Posterior cingulate gyrus (tissue), 11 donors: ENCODE measurements at regions of chr2 and their contacts with region 1.

Region 1: GRCh38 chr2:190880378-190881073 is at the start of gene GLS:
- DNase-seq: peak; percentile 95 to 100 (median 98)

Region 2: GRCh38 chr2:190698895-190699294 is 181.6 kb before region 1 on chr2:
- intact Hi-C with region 1: no loop called
- DNase-seq: no peak

Region 3: DNA sequence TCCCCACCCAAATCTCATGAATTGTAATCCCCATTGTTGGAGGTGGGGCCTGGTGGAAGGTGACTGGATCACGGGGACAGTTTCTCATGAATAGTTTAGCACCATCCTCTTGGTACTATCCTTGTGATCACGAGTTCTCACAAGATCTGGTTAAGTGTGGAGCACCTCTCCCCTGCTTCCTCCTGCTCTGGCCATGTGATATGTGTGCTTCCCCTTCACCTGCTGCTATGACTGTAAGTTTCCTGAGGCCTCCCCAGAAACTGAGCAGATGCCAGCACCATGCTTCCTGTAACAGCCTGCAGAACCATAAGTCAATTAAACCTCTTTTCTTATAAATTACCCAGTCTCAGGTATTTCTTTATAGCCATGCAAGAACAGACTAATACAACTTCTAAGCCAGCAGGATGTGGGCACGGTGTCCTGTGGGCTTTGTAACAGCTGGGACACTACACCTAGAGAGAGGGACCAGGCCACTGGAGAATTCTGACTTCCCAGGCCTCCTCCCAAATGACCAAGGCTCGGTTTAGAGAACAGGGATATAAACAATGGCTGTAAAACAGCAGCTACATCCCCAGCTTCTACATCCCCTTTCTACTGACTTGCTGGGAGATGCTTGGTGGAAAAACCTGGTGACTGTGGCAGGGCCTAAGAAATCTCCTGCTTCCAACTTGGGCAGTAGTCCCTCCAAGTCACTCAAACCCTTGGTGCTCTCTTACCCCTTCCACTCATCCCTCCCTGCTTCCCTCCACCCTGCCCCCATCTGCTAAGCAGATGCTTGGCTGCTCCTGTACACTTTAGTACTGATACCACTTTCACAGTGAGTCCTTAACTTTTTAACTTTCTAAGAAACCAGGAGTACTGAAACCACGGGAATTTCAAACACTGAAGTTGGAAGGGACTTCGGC is 123.1 kb after region 1 on chr2:
- intact Hi-C with region 1: no loop called
- DNase-seq: no peak

Region 4: DNA sequence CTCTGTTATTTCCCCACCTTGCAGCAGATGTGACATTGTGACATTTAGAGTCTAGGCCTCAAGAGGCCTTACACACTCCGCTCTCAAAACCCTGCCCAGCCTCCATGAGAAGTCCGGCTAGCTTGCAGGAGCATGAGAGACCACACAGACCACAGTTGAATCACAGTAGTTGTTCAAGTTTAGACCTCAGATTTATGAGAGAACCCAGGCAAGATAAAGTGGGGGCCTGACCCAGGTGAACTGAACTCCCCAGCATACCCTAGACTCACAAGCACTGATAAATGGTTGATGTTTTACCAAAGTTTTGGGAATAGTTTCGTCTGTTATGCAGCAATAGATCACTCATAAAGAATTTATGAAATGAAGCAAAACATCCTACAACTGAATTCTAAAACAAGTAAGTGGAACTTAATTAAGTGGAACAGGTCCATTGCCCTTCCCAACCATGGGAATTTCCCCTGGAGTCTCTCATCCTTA is 138.2 kb after region 1 on chr2:
- intact Hi-C with region 1: loop called (anchors 1 kb)
- DNase-seq: no peak